Activated T-helper 1 cell treated with anti-CD3 and anti-CD28 coated beads, Interleukin-12 subunit alpha, Interleukin-12 subunit beta, Interleukin-2, Interleukin-4 antibody, amounts not matched to agents 30 ng/mL and 10 ng/mL and 1 ng/mL, durations not matched to agents 14 hours and 24 hours and 36 hours (primary cell): ENCODE measurements at regions of chr6 and their contacts with region 1.

Region 1: GRCh38 chr6:2563635-2564034 is 187.1 kb downstream of the MYLK4 start:
- DNase-seq: peak; percentile 22
- H3K4me3 Mint-ChIP-seq: peak overlapping the region; percentile 13
- H3K27ac Mint-ChIP-seq: no peak overlapping the region
- H3K4me1 Mint-ChIP-seq: peaks cover 14% of the 10 kb centered on the region
- H3K27me3 Mint-ChIP-seq: peaks cover 56% of the 10 kb centered on the region

Region 2: DNA sequence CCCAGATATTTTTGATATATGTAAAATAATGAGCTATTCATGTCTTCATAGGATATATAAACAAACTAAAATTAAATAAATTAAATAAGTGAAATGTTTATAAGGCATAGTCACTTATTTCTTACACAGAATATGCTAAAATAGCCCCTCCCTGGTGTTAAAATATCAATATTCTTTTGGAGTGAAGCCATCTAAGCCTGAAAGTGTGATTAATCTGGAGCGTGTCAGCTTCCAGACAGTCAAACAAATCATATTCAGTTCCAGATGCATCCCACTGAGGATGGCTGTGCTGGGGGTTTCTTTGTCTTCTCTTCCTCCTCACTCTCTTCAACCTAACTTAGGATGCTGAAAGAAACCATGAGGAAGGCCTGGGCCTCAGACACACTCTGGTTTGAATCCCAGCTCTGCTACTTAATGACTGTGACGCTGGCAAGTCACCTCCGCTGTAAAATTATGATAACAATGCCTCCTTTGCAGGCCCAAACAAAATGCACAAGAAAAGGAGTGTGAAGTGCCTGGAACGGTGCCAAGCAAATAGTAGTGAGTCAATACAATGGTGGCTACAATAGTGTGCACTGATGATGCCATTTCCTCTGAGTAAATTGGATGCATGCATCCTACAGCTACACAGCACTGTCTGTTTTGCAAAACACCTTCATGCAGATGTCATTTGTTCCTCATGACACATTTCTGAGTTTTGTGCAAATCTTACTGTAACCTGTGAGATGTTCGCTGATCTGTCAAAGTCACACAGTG is 792.5 kb before region 1 on chr6:
- intact Hi-C with region 1: loop called (anchors 2 kb)
- DNase-seq: no peak
- H3K4me3 Mint-ChIP-seq: no peak overlapping the region
- H3K27ac Mint-ChIP-seq: no peak overlapping the region
- H3K4me1 Mint-ChIP-seq: peaks cover 25% of the 10 kb centered on the region
- H3K27me3 Mint-ChIP-seq: no peaks in the 10 kb centered on the region

Region 3: DNA sequence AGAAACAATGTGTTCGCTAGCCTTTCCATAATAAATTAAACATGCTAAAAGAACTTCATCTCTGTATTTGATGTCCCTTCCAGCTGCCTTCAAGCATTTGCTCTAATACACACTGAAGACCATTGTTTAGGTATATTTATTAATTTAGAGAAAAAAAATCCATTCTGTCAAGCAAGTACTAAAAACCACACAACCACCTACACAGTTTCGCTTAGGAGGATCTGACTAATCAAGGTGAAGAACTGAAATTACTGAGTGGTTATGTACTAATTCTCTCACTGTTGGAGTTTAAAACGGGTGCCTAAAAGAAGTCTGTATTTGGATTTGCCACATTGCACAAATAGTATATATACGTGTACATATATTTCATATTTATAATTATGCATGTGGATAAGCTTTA is 377.1 kb before region 1 on chr6:
- intact Hi-C with region 1: loop called (anchors 5 kb)
- DNase-seq: no peak
- H3K4me3 Mint-ChIP-seq: no peak overlapping the region
- H3K27ac Mint-ChIP-seq: peak overlapping the region; percentile 65
- H3K4me1 Mint-ChIP-seq: peaks cover 20% of the 10 kb centered on the region
- H3K27me3 Mint-ChIP-seq: peaks cover 6% of the 10 kb centered on the region

Region 4: GRCh38 chr6:2314641-2315040 is 249.0 kb before region 1 on chr6:
- intact Hi-C with region 1: no loop called
- DNase-seq: no peak
- H3K4me3 Mint-ChIP-seq: no peak overlapping the region
- H3K27ac Mint-ChIP-seq: no peak overlapping the region
- H3K4me1 Mint-ChIP-seq: no peaks in the 10 kb centered on the region
- H3K27me3 Mint-ChIP-seq: no peaks in the 10 kb centered on the region

Region 5: DNA sequence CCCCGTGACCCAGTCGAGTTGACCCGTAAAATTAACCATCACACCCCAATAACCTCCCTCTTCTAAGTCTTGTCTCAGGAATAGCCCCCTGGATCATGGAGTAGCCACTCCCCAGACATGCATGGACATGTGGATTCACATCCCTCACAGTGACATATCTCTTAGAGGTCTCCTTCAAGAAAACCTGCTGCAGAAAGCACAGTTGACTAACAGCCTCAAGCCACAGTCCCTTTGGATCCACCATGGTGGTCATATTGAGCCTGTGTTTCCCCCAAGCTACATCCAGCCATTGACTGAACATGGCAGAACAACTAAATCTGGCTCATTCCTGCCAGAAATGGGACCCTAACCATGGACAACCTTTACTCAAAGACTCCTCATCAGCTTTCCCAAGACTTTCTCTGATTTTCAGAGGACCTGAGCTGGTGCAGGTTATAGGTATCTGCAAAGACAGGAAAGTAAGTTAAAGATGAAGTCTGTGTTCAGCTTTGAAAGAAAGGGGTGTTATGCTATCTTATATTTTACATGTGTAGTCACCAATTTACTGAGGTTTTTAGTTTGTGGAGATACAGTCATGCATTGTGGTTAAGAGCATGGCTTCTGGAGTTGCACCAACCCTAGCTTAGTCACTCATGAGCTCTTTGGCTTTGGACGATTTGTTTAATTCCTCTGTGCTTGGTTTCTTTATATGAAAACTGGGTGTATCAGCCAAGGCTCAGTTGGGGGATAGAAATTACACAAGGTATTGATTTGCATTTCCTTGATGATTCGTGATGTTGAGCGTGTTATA is 32.0 kb before region 1 on chr6:
- intact Hi-C with region 1: loop called (anchors 5 kb)
- DNase-seq: no peak
- H3K4me3 Mint-ChIP-seq: no peak overlapping the region
- H3K27ac Mint-ChIP-seq: no peak overlapping the region
- H3K4me1 Mint-ChIP-seq: peaks cover 20% of the 10 kb centered on the region
- H3K27me3 Mint-ChIP-seq: peaks cover 77% of the 10 kb centered on the region

Region 6: DNA sequence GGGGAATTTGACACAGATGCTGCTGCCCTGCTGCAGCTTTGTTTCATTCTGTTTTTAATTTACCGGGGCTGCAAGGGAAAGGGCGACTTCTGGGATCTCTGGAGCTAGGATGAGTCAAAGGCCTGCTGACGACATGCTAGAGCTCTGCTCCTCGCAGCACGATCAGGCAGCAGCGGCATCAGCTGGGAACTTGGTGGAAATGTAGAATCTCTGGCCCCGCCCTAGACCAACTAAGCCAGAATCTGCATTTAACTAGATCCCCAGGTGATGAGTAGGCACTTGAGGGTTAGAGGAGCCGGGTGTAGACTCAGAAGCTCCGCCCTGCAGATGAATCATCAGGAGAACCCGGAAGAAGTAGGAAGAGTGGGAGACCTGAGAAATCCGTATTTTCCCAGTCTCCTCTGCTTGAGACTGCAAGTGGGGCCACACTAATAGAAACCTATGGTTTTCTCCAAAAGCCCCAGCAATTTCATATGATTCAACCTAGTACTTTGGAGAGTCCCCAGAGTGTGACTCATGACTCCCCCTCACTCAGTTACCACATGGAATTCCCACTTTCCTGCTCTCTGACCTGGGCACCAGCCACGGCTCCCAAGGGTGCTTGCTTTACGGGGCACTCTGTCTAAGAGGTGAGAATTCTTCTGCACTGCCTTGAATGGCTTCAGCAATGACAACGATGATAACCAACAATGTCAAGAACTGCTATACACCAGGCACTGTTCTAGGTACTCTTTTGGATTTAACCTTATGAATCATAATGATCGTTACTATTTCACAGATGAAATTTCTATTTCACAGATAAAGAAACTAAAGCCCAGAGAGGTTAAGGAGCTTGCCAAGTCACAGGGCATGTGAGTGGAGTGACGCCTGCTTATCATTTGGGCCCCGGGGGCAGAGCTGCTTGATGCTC is 645.7 kb after region 1 on chr6:
- intact Hi-C with region 1: loop called (anchors 2 kb)
- DNase-seq: no peak
- H3K4me3 Mint-ChIP-seq: peak overlapping the region; percentile 43
- H3K27ac Mint-ChIP-seq: peak overlapping the region; percentile 89
- H3K4me1 Mint-ChIP-seq: peaks cover 41% of the 10 kb centered on the region
- H3K27me3 Mint-ChIP-seq: peaks cover 23% of the 10 kb centered on the region